ENCODE measurements at regions of chr17 and their contacts with region 1.

Region 1: DNA sequence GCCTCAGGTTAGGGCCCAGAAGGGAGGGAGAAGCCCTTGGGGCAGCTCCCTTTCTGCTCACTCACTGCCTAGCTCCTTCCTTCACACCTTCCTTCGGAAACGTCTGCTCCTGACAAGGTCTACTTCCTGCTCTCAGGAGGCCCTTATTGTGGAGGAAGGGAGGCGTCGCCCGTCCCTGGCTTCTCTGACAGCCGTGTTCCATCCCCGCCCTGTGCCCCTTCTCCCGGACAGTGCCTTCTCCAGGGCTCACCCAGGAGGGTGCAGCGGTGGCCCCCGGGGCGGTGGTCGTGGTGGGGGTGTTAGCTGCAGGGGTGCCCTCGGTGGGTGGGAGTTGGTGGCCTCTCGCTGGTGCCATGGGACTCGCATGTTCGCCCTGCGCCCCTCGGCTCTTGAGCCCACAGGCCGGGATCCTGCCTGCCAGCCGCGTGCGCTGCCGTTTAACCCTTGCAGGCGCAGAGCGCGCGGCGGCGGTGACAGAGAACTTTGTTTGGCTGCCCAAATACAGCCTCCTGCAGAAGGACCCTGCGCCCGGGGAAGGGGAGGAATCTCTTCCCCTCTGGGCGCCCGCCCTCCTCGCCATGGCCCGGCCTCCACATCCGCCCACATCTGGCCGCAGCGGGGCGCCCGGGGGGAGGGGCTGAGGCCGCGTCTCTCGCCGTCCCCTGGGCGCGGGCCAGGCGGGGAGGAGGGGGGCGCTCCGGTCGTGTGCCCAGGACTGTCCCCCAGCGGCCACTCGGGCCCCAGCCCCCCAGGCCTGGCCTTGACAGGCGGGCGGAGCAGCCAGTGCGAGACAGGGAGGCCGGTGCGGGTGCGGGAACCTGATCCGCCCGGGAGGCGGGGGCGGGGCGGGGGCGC is 231.9 kb downstream of the SEC14L1 start:
- DNase-seq: peak; percentile 67 to 86 (median 80)
- H3K4me3 ChIP-seq: peak overlapping the region; percentile 13 to 95 (median 87)
- H3K27ac ChIP-seq: peak overlapping the region; percentile 21 to 89
- H3K4me1 ChIP-seq: peaks cover 12 to 76% (median 52%) of the 10 kb centered on the region in 4 experiments
- H3K27me3 ChIP-seq: no peaks in the 10 kb centered on the region

Region 2: GRCh38 chr17:77331301-77331864 is 41.3 kb before region 1 on chr17:
- CTCF ChIA-PET with region 1: interaction called, 19 read pairs
- POLR2A ChIA-PET with region 1: interaction called, 4 read pairs
- DNase-seq: peak; percentile 88 to 95 (median 94)
- H3K4me3 ChIP-seq: peak overlapping the region in 5 of 7 experiments; percentile 27 to 69 (median 54)
- H3K27ac ChIP-seq: no peak overlapping the region
- H3K4me1 ChIP-seq: peaks cover 3 to 57% (median 23%) of the 10 kb centered on the region in 4 experiments
- H3K27me3 ChIP-seq: no peaks in the 10 kb centered on the region

Region 3: GRCh38 chr17:77358801-77359200 is 13.9 kb before region 1 on chr17:
- CTCF ChIA-PET with region 1: interaction called, 18 read pairs
- POLR2A ChIA-PET with region 1: interaction called, 3 read pairs
- DNase-seq: no peak
- H3K4me3 ChIP-seq: no peak overlapping the region
- H3K27ac ChIP-seq: no peak overlapping the region
- H3K4me1 ChIP-seq: peaks cover 0 to 26% (median 24%) of the 10 kb centered on the region in 4 experiments
- H3K27me3 ChIP-seq: no peaks in the 10 kb centered on the region

Region 4: GRCh38 chr17:77391668-77392375 is 19.2 kb after region 1 on chr17:
- CTCF ChIA-PET with region 1: interaction called, 16 read pairs
- POLR2A ChIA-PET with region 1: interaction called, 7 read pairs
- DNase-seq: peak in 2 of 3 donors; percentile 61 to 64
- H3K4me3 ChIP-seq: peak overlapping the region in 4 of 7 experiments; percentile 19 to 49 (median 32)
- H3K27ac ChIP-seq: no peak overlapping the region
- H3K4me1 ChIP-seq: peaks cover 7 to 84% (median 77%) of the 10 kb centered on the region in 4 experiments
- H3K27me3 ChIP-seq: no peaks in the 10 kb centered on the region

Region 5: GRCh38 chr17:77420804-77421629 is 48.3 kb after region 1 on chr17:
- CTCF ChIA-PET with region 1: interaction called, 10 read pairs
- POLR2A ChIA-PET with region 1: no interaction called
- DNase-seq: peak in 2 of 3 donors; percentile 68 to 72
- H3K4me3 ChIP-seq: peak overlapping the region in 3 of 7 experiments; percentile 22 to 33 (median 31)
- H3K27ac ChIP-seq: no peak overlapping the region
- H3K4me1 ChIP-seq: peaks cover 0 to 72% (median 40%) of the 10 kb centered on the region in 4 experiments
- H3K27me3 ChIP-seq: no peaks in the 10 kb centered on the region

Region 6: GRCh38 chr17:77429919-77430752 is 57.5 kb after region 1 on chr17:
- CTCF ChIA-PET with region 1: interaction called, 20 read pairs
- POLR2A ChIA-PET with region 1: no interaction called
- DNase-seq: peak; percentile 65 to 73 (median 68)
- H3K4me3 ChIP-seq: peak overlapping the region in 1 of 7 experiments; percentile 6
- H3K27ac ChIP-seq: no peak overlapping the region
- H3K4me1 ChIP-seq: peaks cover 4 to 99% (median 77%) of the 10 kb centered on the region in 4 experiments
- H3K27me3 ChIP-seq: no peaks in the 10 kb centered on the region

Measured in common myeloid progenitor, CD34-positive (primary cell).